BJ (cell line): ENCODE measurements at regions of chr3 and their contacts with region 1.

Region 1: DNA sequence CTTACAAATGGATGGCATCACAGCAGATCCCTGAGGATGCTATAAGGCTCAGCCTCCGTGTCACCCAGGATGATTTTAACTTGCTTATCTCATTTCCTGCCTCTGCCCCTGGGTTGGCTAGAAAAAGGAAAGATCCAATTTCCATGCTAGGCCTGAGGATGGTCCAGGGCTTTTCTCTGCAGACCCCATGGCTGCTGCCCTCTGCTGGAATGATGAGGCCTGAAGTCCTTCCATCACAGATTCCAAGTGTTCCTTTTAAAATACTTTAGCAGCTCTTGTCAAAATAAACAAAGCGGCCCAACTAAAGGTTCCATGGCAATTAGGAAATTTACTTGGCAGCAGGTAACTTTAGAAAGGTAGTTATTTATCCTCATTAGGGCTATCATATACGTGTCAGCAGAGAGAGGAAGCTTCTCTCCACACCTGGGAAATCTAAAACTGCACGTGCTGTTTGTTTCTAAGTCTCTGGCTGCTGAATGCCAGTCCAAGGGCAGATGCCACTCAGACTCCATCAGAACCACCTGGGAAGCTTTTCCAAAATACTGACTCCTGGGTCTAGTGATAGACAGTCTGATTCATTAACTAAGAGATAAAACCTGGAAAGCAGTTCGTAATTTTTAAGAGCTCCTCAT is 401.9 kb upstream of the IL12A start:
- DNase-seq: no peak
- H3K4me3 ChIP-seq: no peak overlapping the region
- H3K27me3 ChIP-seq: no peaks in the 10 kb centered on the region
- CTCF ChIP-seq: peak; percentile 74

Region 2: DNA sequence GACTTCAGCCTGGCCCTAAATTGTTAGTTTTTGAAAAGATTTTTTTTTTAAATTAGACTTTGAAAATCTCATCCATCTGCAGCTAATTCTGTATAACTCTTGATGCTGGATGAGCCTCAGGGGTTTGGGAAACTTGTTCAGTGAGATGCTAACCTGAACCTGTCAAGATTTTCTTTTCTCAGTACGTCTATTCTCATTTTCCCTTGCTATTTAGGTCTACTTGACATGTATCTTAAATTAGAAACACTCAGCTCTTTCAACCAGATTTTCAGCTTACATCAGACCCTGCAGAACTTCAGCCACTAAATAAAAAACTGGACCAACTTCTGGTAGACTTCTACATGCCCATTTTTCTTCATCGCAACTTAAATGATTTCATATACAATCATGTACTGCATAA is 723.4 kb before region 1 on chr3:
- CTCF ChIA-PET with region 1: no interaction called
- POLR2A ChIA-PET with region 1: interaction called, 10 read pairs
- DNase-seq: no peak
- H3K4me3 ChIP-seq: no peak overlapping the region
- H3K27me3 ChIP-seq: no peaks in the 10 kb centered on the region; the same call in 1 of the 2 replicates
- CTCF ChIP-seq: no peak

Region 3: DNA sequence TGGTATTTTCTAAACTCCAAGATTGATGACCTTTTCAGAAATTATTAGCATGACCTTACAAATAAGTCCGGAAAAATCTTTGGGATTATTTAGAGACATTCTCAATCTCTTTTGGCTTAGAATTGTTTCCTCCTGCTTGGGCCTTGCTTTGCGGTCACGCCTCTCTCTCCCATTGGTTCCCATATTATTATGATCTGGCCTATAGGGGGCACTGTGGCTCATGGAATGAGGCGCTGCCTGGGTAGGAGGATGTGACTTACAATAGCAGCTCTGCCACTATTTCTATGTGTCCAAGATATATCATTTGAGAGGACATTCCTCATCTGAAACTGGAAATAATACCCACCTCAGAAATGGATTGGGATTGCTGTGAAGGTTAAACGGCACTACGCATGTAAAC is 319.9 kb before region 1 on chr3:
- CTCF ChIA-PET with region 1: interaction called, 11 read pairs
- POLR2A ChIA-PET with region 1: no interaction called
- DNase-seq: no peak
- H3K4me3 ChIP-seq: no peak overlapping the region
- H3K27me3 ChIP-seq: peaks cover 3% of the 10 kb centered on the region; the same call in 1 of the 2 replicates
- CTCF ChIP-seq: peak; percentile 27

Region 4: GRCh38 chr3:159293493-159293892 is 293.2 kb before region 1 on chr3:
- CTCF ChIA-PET with region 1: no interaction called
- POLR2A ChIA-PET with region 1: no interaction called
- DNase-seq: no peak
- H3K4me3 ChIP-seq: no peak overlapping the region
- H3K27me3 ChIP-seq: peaks cover 2% of the 10 kb centered on the region; the same call in 1 of the 2 replicates
- CTCF ChIP-seq: no peak

Region 5: DNA sequence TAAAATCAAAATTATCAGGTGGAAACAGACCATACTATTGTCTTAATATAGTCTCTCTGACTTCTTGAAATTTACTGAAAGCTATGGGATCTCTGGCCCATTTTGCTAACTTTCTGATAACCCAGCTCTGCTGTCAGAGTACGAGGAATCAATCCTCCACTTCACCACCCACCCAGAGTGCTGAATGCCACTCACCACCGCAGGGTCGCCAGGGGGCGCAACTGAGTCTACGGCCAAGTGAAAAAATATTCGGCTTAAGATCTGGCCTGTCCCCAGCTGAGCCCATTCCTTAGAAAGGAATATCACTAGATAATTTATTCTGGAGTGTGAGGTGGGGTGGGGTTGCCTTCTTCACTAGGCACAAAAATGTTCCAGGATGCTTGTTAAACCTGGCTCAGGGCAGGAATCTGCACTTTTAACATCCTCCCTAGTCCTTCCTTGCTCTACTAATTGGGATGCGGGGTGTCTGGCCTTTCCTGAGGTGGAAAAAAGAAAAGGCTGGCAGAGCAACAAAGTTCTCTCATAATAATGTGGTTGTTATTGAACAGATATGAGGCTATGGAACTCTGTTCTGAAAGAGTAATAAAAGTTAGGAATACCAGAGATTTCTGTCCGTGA is 264.3 kb before region 1 on chr3:
- CTCF ChIA-PET with region 1: interaction called, 10 read pairs
- POLR2A ChIA-PET with region 1: no interaction called
- DNase-seq: no peak
- H3K4me3 ChIP-seq: no peak overlapping the region
- H3K27me3 ChIP-seq: no peaks in the 10 kb centered on the region
- CTCF ChIP-seq: peak; percentile 87